Activated CD4-positive, alpha-beta T cell treated with anti-CD3 and anti-CD28 coated beads for 36 hours (primary cell): ENCODE measurements at regions of chr2 and their contacts with region 1.

Region 1: DNA sequence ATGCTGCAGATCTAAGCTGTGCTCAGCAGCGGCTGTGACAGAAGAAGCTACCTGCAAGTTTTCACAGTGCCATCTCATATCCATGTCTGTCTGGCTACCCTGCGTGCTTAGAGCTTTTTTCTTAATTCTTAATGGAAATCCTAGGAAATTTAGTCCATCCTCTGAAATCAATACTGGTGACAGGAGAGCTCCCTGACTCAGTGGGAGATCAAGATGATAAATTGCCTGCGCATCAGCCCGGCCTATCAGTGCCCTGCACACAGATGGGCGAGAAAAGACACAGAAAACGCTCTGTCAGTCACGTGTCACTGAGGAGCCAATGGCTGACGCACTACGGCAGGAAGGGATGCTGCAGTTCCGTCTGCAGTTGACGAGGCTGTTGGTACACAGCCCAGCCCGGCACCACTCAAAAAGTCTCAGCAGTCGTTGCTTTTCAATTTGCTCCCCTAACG is 819.6 kb upstream of the FSHR start:
- DNase-seq: peak; percentile 82
- ATAC-seq: peak; percentile 100
- H3K4me3 Mint-ChIP-seq: peak overlapping the region; percentile 70
- H3K27ac Mint-ChIP-seq: peak overlapping the region; percentile 44
- H3K4me1 Mint-ChIP-seq: peaks cover 4% of the 10 kb centered on the region
- H3K27me3 Mint-ChIP-seq: no peaks in the 10 kb centered on the region

Region 2: GRCh38 chr2:49943944-49944778 is 29.8 kb before region 1 on chr2:
- CTCF ChIA-PET with region 1: no interaction called
- POLR2A ChIA-PET with region 1: no interaction called
- intact Hi-C with region 1: loop called in 1 of 2 experiments (anchors 1 kb)
- DNase-seq: no peak
- ATAC-seq: no peak
- H3K4me3 Mint-ChIP-seq: no peak overlapping the region
- H3K27ac Mint-ChIP-seq: no peak overlapping the region
- H3K4me1 Mint-ChIP-seq: peaks cover 14% of the 10 kb centered on the region
- H3K27me3 Mint-ChIP-seq: no peaks in the 10 kb centered on the region

Region 3: DNA sequence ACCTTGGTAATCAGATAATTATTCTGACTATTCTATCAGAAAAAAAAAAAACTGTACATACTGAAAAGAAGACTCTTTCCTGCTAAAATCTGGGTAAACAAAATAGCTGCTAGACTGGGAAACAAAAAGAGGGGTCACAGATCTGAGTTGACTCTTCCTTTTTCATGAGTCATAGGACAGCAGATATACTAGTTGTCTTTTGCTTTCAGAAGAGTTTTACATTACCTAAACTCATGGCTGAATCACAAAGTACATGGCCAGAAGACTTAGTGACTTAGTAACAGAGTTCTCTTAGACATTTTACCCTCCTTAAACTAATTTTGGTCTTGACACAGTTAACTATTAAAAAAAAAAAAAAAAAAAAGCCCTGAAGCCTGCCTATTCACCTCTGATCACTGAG is 14.3 kb after region 1 on chr2:
- CTCF ChIA-PET with region 1: no interaction called
- POLR2A ChIA-PET with region 1: no interaction called
- intact Hi-C with region 1: no loop called
- DNase-seq: no peak
- ATAC-seq: no peak
- H3K4me3 Mint-ChIP-seq: no peak overlapping the region
- H3K27ac Mint-ChIP-seq: no peak overlapping the region
- H3K4me1 Mint-ChIP-seq: no peaks in the 10 kb centered on the region
- H3K27me3 Mint-ChIP-seq: peaks cover 2% of the 10 kb centered on the region